CD14-positive monocyte (primary cell): ENCODE measurements at regions of chr15 and their contacts with region 1.

Region 1: GRCh38 chr15:68817304-68818065 is 3.2 kb downstream of the ANP32A start:
- DNase-seq: peak; percentile 58 to 77 (median 68)
- H3K4me3 ChIP-seq: peak overlapping the region; percentile 92 to 98 (median 96)
- H3K4me3 Mint-ChIP-seq: peak overlapping the region; percentile 96 to 99
- H3K27ac ChIP-seq: peak overlapping the region; percentile 96 to 97
- H3K27ac Mint-ChIP-seq: peak overlapping the region; percentile 94 to 99 (median 96)
- H3K4me1 ChIP-seq: peaks cover 41 to 58% of the 10 kb centered on the region in 2 donors
- H3K4me1 Mint-ChIP-seq: peaks cover 50% of the 10 kb centered on the region
- H3K27me3 ChIP-seq: no peaks in the 10 kb centered on the region
- H3K27me3 Mint-ChIP-seq: peaks cover 0 to 2% (median 1%) of the 10 kb centered on the region in 3 donors
- CTCF ChIP-seq: no peak

Region 2: DNA sequence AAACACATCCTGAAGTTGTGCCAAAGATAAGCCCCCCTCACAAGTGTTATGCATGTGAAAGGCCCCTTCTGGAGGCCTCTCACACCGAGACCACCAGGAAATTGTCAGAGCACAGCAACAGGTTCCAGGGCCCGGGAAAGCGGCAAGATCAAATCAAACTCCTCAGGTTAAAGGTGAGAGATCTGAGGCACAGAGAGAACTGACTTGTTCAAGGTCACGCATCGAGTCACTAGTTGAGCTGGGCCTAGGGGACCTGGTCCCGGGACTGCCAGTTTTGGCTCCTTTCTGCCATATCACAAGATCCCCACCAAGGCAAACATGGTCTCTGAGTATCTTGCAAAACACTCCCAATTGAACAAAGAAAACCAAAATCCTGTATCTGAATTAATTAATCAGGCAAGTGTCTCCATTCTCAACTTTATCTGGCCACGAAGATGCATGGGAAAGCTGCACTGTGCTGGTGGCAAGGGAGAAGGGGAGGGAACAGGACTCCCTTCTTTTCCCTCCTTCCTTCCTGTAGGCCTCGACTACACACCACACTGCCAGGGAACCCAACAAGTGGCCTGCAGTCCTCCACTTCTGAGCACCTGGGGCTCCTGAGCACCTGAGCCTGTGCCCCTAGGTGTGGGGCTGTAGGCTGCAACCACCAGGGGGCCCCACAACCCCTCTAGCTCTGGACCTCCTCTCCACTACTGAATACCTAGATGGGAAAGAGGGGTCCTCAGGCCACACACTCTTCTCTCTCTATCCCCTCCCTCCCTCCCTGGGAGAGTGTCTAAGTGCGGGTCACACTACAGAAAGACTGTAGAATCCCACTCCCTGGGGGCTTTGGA is 34.0 kb before region 1 on chr15:
- intact Hi-C with region 1: loop called (anchors 5 kb)
- DNase-seq: peak in 2 of 3 donors; percentile 42 to 46
- H3K4me3 ChIP-seq: peak overlapping the region in 1 of 3 experiments; percentile 70
- H3K4me3 Mint-ChIP-seq: peak overlapping the region in 1 of 2 donors; percentile 78
- H3K27ac ChIP-seq: peak overlapping the region; percentile 88 to 93
- H3K27ac Mint-ChIP-seq: peak overlapping the region; percentile 85 to 98 (median 93)
- H3K4me1 ChIP-seq: peaks cover 54 to 55% of the 10 kb centered on the region in 2 donors
- H3K4me1 Mint-ChIP-seq: peaks cover 57% of the 10 kb centered on the region
- H3K27me3 ChIP-seq: no peaks in the 10 kb centered on the region
- H3K27me3 Mint-ChIP-seq: peaks cover 0 to 3% (median 0%) of the 10 kb centered on the region in 3 donors
- CTCF ChIP-seq: peak; percentile 78

Region 3: GRCh38 chr15:68795298-68795848 is 22.1 kb before region 1 on chr15:
- intact Hi-C with region 1: loop called in 1 of 2 experiments (anchors 2 kb)
- DNase-seq: peak; percentile 75 to 89 (median 87)
- H3K4me3 ChIP-seq: peak overlapping the region; percentile 18 to 71 (median 21)
- H3K4me3 Mint-ChIP-seq: peak overlapping the region; percentile 77 to 86
- H3K27ac ChIP-seq: peak overlapping the region; percentile 87 to 92
- H3K27ac Mint-ChIP-seq: peak overlapping the region; percentile 86 to 94 (median 90)
- H3K4me1 ChIP-seq: peaks cover 95 to 97% of the 10 kb centered on the region in 2 donors
- H3K4me1 Mint-ChIP-seq: peaks cover 98% of the 10 kb centered on the region
- H3K27me3 ChIP-seq: no peaks in the 10 kb centered on the region
- H3K27me3 Mint-ChIP-seq: peaks cover 0 to 2% (median 0%) of the 10 kb centered on the region in 3 donors
- CTCF ChIP-seq: no peak

Region 4: DNA sequence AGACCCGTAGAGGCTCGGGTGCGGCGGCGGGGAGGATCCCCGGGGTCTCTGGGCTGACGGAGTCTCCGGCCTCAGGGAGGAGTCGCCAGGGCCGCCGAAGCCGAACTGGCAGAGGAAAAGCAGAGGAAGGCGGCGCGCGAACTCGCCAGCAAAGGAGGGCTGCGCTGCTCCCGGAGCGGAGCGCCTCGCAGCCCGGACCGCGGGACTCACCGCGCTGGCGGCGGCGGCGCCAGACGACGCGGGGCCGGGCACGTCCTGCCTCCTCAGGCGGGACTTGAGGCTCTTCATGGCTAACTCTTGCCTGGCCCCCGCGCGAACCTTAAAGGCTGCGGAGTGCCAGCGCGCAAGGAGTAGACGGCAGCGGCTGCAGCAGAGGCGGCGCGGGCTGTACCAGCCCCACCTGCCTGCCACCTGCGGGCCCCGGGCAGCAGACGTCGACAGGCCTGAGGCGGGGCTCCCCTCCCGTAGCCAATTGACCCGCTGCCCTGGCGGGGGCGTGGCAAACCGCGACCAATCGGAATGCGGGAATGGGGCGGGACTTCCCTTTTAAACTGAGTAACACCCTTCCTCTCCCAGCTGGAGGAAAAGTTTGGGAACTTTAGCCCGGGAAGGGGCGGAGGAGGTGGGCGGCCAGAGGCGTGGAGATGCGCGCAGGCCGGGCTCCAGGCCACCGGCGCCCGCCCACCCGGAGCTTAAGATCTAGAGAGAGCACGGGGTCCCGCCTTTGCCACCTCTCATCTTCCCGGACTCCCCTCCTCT is 1945.8 kb after region 1 on chr15 and contains the start of gene UACA:
- intact Hi-C with region 1: loop called in 1 of 2 experiments (anchors 10 kb)
- DNase-seq: peak; percentile 59 to 80 (median 78)
- H3K4me3 ChIP-seq: peak within 1 kb of the TSS; percentile 55 to 84 (median 76)
- H3K4me3 Mint-ChIP-seq: peak within 1 kb of the TSS; percentile 89 to 98
- H3K27ac ChIP-seq: no peak within 1 kb of the TSS
- H3K27ac Mint-ChIP-seq: peak within 1 kb of the TSS in 5 of 7 donors; percentile 13 to 78 (median 71)
- H3K4me1 ChIP-seq: peaks cover 28 to 33% of the 10 kb centered on the region in 2 donors
- H3K4me1 Mint-ChIP-seq: peaks cover 25% of the 10 kb centered on the region
- H3K27me3 ChIP-seq: peaks cover 26 to 46% of the 10 kb centered on the region in 2 donors
- H3K27me3 Mint-ChIP-seq: peaks cover 31 to 44% (median 40%) of the 10 kb centered on the region in 3 donors
- CTCF ChIP-seq: no peak
- polyA plus RNA-seq, gene UACA: 1.7 to 3.1 (median 2.4) TPM